ENCODE measurements at regions of chr5 and their contacts with region 1.

Region 1: DNA sequence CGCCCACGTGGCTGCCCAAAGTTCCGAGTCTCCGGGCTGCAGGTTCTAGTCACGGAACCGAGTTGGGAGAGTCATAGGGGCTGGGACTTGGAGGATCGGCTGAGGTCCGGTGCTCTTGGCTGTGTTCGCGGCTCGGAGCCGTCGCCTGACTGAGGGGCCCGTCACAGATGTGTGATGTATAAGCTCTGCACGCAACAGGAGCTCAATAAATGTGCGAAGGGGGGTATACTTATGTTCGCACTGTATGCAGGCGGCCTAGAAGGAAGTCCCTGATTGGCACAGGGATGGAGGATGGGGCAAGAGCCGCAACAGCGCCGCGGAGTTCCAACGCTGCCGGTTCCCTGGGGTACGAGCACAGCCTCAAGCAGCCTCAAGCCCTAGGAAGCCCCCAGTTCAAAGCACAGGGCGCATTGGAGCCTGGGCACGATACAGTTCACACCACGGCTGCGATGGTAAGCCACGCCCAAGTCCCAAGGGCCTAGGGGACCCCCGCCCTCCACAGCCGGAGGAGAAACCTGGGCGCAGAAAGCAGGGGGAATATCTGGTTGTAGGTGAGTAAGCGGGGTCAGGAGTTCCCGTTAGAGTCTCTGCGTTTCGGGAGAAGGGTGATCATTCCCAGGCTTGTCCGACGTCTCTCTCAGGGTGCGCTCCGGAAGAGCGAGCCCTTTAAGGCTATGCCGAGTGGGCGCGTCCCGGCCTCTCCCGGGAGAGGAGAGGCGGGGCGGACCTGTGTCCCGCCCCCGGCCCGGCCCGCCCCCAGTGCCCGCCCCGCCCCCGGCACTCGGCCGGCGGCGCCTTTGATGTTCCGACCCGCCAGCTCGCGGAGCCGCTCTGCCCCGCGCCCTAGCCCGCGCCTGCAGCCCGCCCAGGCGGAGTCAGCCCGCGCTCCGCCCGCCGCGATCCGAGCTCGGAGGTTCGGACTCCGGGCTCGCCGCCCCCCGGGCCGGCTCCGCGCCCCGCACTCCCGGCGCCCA is at the start of gene TCF7:
- DNase-seq: peak; percentile 75
- ATAC-seq: peak; percentile 92
- H3K4me3 ChIP-seq: peak within 1 kb of the TSS; percentile 67
- H3K27ac ChIP-seq: no peak within 1 kb of the TSS
- H3K4me1 ChIP-seq: peaks cover 2% of the 10 kb centered on the region; the same call in 1 of the 2 replicates
- H3K27me3 ChIP-seq: no peaks in the 10 kb centered on the region
- CTCF ChIP-seq: no peak
- total RNA-seq, gene TCF7: 3.9 and 7.0 TPM in 2 replicates

Region 2: GRCh38 chr5:133347039-133347438 is 767.1 kb before region 1 on chr5:
- CTCF ChIA-PET with region 1: no interaction called
- POLR2A ChIA-PET with region 1: interaction called, 15 read pairs
- intact Hi-C with region 1: no loop called
- DNase-seq: no peak
- ATAC-seq: no peak
- H3K4me3 ChIP-seq: no peak overlapping the region
- H3K27ac ChIP-seq: no peak overlapping the region
- H3K4me1 ChIP-seq: no peaks in the 10 kb centered on the region
- H3K27me3 ChIP-seq: no peaks in the 10 kb centered on the region
- CTCF ChIP-seq: no peak

Region 3: GRCh38 chr5:133968049-133968980 is 145.9 kb before region 1 on chr5 and contains the start of gene C5orf15:
- CTCF ChIA-PET with region 1: no interaction called
- POLR2A ChIA-PET with region 1: no interaction called
- intact Hi-C with region 1: no loop called
- DNase-seq: peak; percentile 95
- ATAC-seq: peak; percentile 97
- H3K4me3 ChIP-seq: peak within 1 kb of the TSS; percentile 90
- H3K27ac ChIP-seq: peak within 1 kb of the TSS; percentile 39
- H3K4me1 ChIP-seq: peaks cover 11% of the 10 kb centered on the region
- H3K27me3 ChIP-seq: no peaks in the 10 kb centered on the region
- CTCF ChIP-seq: no peak
- total RNA-seq, gene C5orf15: 22.7 and 45.2 TPM in 2 replicates

Region 4: DNA sequence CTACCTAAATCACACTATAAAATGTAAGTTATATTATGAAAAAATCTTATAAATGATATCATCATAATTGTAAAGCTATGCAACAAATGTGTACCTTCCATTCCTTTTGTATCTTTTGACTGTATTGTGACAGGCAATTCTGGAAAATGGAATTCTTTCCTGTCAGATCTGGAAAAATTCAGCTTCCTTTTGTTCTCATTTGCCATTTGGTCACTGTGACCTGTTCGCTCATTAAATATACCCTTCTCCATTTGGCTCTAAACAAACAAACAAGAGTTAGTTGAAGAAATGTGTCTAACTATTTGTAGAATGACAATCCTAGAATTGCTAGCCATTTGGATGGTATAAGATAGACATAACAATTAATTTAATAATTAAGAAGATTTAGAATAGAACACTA is 190.1 kb after region 1 on chr5:
- CTCF ChIA-PET with region 1: no interaction called
- POLR2A ChIA-PET with region 1: interaction called, 10 read pairs
- intact Hi-C with region 1: no loop called
- DNase-seq: no peak
- ATAC-seq: no peak
- H3K4me3 ChIP-seq: no peak overlapping the region
- H3K27ac ChIP-seq: no peak overlapping the region
- H3K4me1 ChIP-seq: no peaks in the 10 kb centered on the region
- H3K27me3 ChIP-seq: no peaks in the 10 kb centered on the region
- CTCF ChIP-seq: no peak

Measured in PC-3 (cell line).